Activated CD4-positive, alpha-beta memory T cell treated with anti-CD3 and anti-CD28 coated beads for 36 hours (primary cell): ENCODE measurements at regions of chr1 and their contacts with region 1.

Region 1: DNA sequence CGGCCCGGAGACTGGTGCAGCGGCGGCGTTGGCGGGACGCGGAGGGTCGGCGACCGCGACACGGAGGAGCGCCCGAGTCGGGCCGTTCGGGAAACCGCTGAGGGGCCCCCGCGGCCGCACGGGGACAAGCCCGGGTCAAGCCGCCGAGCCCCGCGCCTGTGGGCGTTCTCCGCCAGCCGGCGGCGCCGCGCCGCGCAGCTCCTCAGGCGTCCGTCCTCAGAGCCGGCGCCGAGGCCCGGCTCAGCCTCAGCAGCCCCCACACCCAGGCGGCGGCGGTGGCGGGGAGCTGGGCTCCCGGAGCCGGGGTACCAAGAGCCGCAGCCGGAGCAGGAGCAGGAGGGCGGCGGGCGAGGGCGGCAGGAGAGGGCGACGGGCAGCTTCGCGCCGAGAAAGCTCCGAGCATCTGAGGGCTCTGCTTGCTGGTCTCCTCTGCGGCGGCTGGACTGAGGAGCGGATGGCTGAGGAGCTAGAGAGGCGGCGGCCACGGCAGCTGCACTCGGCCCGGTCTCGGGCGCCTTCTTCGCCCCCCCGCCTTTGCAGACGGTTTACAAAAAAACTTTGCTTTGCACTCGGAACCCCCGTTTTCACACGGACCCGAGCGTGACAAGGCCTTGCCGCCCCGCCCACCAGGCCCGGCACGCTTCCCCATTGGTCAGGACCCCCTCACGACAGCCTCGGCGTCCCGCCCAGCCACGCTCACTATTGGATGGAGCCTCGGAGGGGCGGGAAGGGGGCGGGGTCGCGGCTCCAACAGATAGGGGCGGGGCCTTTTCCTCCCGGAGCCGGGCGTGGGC is at the start of gene SLC30A1:
- DNase-seq: peak; percentile 99
- H3K4me3 Mint-ChIP-seq: peak within 1 kb of the TSS; percentile 91
- H3K27ac Mint-ChIP-seq: peak within 1 kb of the TSS; percentile 69
- H3K4me1 Mint-ChIP-seq: peaks cover 32% of the 10 kb centered on the region
- H3K27me3 Mint-ChIP-seq: no peaks in the 10 kb centered on the region
- total RNA-seq, gene SLC30A1: 3.5 to 3.9 TPM

Region 2: GRCh38 chr1:211258756-211259637 is 319.8 kb before region 1 on chr1 and contains the start of gene RCOR3:
- CTCF ChIA-PET with region 1: no interaction called
- POLR2A ChIA-PET with region 1: interaction called, 3 read pairs
- intact Hi-C with region 1: loop called (anchors 1 kb)
- DNase-seq: peak; percentile 95
- H3K4me3 Mint-ChIP-seq: peak within 1 kb of the TSS; percentile 83
- H3K27ac Mint-ChIP-seq: peak within 1 kb of the TSS; percentile 93
- H3K4me1 Mint-ChIP-seq: peaks cover 16% of the 10 kb centered on the region
- H3K27me3 Mint-ChIP-seq: no peaks in the 10 kb centered on the region
- total RNA-seq, gene RCOR3: 30.2 to 32.7 TPM

Region 3: DNA sequence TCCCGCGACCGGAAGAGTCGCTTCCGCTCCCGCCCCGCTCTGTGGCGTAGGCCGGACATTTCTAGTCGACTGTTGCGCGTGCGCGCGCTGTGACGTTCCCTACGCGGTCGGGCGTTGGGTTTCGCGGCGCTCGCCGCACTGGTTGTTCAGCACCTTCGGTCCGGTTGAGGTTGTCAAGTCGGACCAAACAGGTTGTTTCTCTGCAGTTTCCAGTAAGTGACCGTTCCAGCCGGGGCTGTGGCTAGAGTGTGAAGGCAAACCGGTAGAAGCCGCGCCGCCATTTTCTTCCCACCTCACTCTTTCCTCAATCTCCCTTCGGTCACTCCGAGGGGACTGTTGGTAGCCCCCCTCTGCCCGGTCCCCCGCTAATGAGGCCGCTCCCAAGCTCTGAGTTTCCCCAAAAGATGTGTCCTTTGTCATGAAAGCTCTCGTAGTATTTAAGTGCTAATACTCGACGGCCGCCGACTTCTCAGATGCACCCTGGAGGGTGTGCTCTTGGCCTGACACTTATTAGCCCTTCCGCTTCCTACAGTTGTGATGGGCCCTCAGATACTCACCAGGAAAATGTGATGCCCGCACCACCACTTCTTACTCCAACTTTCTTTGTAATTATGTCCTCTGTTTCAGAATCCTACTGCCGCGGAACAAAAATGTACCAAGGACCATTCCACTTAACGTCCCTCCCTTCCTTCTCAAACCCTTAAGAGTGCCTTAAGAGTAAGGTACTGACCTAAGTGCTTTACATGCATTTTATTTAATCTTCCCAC is 195.9 kb before region 1 on chr1:
- CTCF ChIA-PET with region 1: no interaction called
- POLR2A ChIA-PET with region 1: no interaction called
- intact Hi-C with region 1: loop called (anchors 1 kb)
- DNase-seq: peak; percentile 88
- H3K4me3 Mint-ChIP-seq: peak overlapping the region; percentile 78
- H3K27ac Mint-ChIP-seq: peak overlapping the region; percentile 88
- H3K4me1 Mint-ChIP-seq: peaks cover 42% of the 10 kb centered on the region
- H3K27me3 Mint-ChIP-seq: no peaks in the 10 kb centered on the region

Region 4: DNA sequence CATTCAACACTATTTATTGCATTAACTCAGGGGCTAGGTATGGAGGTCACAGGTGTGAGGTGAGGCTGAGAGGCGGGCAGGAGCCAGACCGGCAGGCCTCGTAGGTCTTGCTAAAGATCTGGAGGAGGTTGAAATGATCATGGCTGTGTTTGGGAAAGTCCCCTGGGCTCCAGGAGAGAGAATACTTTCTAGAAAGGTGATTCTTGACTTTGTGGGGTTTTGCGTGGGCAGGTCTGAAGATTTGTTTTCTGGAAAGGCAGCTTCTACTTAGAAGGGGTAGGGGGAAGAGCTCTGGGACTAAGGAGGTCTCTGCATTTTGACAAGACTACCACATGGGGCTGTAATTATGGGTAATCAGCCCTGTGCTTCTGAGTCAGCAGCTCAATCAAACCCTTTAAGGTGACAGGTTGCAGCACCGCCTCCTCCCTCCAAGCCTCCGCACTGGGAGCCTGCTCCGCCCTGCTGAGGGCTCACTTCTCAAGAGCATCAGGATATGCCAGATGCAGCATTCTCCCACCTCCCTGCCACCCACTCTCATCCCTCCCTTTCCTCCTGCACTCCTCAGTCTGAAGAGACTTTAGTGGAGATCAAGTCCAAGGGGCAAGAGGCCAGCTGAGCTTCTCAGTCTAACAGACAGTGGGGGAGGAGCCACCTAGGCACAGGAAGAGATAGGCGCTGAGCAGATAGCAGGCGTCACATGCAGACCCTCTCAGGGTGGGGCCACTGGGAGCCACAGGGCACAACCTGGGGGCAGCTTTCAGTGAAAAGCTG is 30.3 kb before region 1 on chr1:
- CTCF ChIA-PET with region 1: interaction called, 3 read pairs
- POLR2A ChIA-PET with region 1: interaction called, 3 read pairs
- intact Hi-C with region 1: loop called (anchors 2 kb)
- DNase-seq: peak; percentile 67
- H3K4me3 Mint-ChIP-seq: no peak overlapping the region
- H3K27ac Mint-ChIP-seq: no peak overlapping the region
- H3K4me1 Mint-ChIP-seq: no peaks in the 10 kb centered on the region
- H3K27me3 Mint-ChIP-seq: no peaks in the 10 kb centered on the region

Region 5: DNA sequence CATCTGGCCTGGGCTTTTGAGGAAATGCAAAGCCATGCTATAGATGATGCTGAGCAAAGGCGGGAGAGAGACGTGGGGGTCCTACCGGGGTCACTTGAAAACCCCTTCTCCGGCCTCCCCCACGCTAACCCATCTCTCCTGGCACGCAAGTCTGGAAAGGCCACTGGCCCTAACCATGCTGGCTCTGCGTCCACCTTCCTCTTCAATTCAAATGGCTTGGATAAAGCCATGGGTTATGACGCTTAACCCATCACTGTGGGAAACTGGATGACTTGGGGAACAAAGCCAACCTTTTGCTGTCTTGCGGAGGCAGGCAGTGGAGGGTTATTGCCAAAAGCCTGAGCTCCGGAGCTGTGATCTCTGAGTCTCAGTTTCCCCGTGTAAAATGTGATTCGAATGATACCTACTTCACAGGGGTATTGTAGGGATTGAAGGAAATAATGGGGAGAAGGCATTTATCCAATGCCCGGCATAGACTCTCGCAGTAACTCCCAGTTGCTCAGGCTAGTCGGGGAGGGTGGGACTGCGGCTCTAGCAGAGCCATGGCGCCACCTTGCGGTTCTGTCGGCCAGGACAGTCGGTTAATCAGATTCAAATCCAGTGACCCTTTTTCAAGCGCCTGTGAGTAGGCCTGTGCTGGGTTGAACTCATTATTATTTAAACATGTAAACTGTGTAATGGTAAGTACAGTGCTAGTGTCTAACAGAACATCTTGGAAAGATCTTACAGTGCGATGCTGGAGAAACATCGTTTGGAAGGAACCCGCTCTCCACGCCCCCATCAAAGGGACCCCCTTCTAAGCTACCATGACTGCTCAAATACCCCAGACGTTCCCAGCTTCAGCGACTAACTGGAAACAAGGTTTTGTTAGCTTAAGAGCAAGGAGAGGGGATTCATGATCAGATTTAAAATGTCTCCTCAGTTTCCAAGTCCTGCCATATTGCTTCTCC is 76.3 kb after region 1 on chr1:
- CTCF ChIA-PET with region 1: interaction called, 20 read pairs
- POLR2A ChIA-PET with region 1: no interaction called
- intact Hi-C with region 1: loop called (anchors 1 kb)
- DNase-seq: peak; percentile 87
- H3K4me3 Mint-ChIP-seq: no peak overlapping the region
- H3K27ac Mint-ChIP-seq: no peak overlapping the region
- H3K4me1 Mint-ChIP-seq: no peaks in the 10 kb centered on the region
- H3K27me3 Mint-ChIP-seq: no peaks in the 10 kb centered on the region

Region 6: DNA sequence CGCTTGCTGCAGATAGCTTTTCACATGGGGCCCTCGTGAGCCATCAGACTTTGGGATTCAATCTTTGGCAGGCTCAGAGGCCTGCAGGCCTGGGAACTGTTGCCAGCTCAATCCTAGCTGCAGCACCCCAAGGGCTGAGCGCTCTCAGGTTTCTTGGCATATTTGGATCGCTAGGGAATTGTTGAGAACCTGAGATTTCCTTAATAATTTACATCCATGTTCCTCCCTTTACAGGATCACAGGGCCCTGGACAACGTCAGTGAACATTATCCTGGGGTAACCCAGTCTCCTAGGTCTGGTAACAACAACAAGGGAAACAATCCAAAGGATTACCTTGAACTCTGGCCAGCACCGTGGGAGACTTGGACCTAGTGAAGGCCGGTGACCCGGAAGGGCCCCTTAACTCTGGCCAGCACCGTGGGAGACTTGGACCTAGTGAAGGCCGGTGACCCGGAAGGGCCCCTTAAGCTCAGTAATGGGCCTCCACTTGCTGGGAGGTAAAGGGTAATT is 145.9 kb after region 1 on chr1:
- CTCF ChIA-PET with region 1: no interaction called
- POLR2A ChIA-PET with region 1: no interaction called
- intact Hi-C with region 1: no loop called
- DNase-seq: no peak
- H3K4me3 Mint-ChIP-seq: no peak overlapping the region
- H3K27ac Mint-ChIP-seq: no peak overlapping the region
- H3K4me1 Mint-ChIP-seq: no peaks in the 10 kb centered on the region
- H3K27me3 Mint-ChIP-seq: peaks cover 4% of the 10 kb centered on the region

Region 7: DNA sequence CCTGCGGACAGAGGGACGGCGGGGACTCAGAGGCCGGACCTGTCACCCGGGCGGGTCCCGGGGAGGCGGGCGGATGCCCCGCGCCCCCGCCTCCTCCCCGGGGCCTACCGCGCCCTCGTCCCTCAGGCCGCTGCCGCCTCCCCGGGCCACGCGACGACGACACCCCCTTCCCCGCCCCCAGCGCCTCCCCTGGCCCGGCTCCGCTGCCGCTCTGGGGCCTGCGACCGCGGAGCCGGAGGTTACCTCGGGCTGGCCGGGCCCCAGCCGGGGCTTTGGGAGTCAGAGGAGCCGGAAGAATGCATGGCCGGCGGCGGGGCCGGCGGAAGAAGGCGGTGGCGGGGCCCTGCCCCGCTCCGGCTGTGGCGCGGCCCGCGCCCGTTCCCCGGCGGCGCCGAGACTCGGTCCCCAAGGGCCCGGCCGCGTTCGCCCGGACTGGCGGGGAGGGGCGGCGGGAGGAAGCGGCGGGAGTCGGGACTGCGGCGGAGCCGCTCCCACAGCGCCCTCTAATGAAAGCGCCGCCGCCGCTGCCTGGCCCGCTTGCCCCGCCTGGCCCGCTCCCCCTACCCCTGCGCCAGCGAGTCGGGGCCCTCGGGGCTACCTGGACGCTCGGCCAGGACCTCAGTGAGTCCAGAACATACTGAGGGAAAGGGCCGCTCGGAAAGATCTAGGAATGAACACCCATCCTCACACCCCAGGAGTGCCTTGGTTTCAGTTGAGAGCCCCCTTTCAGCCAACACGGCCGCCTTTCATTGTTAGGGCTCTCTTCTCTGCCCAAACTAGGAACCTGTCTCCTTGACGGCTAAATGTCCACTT is 251.7 kb after region 1 on chr1 and contains the start of gene LPGAT1:
- CTCF ChIA-PET with region 1: no interaction called
- POLR2A ChIA-PET with region 1: no interaction called
- intact Hi-C with region 1: loop called (anchors 5 kb)
- DNase-seq: peak; percentile 77
- H3K4me3 Mint-ChIP-seq: peak within 1 kb of the TSS; percentile 86
- H3K27ac Mint-ChIP-seq: peak within 1 kb of the TSS; percentile 83
- H3K4me1 Mint-ChIP-seq: peaks cover 61% of the 10 kb centered on the region
- H3K27me3 Mint-ChIP-seq: no peaks in the 10 kb centered on the region
- total RNA-seq, gene LPGAT1: 31.8 to 34.7 TPM

Region 8: DNA sequence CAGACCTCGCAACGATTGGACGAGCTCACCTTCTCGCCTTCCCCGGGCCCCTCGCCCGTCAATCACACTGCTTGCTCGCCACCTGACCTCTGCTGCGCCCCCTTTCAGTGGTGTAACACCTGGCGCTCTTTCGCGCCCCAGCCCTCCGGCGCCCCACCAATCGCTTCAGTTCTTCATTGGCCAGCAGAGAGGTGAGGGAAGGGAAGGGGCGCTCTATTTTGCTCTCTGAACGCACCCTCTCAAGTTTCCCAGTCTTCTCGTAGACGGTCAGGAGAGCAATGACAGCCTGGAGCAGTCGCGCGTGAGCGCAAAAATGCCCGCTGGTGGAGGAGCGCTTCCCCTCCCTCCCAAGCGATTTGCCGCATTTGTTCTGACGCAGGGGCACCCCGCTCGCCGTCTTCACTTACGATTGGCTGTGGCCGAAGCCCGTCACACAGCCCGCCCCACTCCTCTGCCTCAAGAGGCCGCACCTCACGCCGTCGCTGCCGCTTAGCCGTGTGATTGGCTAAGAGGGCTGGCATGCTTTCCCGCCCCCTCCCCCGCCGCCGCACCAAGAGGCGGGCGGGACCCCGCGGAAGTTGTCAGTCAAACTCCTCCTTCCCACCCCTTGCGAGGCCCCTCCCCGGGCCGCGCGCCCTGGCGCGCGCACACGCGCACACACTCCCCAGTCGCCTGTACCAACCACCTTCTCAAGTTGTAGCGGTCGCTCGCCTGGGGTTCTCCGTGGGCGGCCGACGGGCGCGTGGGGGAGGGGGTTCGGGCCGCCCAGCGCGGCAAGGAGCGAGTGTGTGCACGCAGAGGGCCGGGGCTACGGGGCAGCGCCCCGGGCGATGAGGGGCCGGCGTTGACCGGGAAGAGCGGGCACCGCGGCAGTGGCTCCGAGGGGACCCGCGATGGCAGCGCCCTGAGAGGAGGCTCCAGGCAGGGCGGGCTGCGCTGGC is 706.2 kb after region 1 on chr1 and contains the start of gene PPP2R5A:
- CTCF ChIA-PET with region 1: no interaction called
- POLR2A ChIA-PET with region 1: no interaction called
- intact Hi-C with region 1: loop called (anchors 1 kb)
- DNase-seq: peak; percentile 99
- H3K4me3 Mint-ChIP-seq: peak within 1 kb of the TSS; percentile 92
- H3K27ac Mint-ChIP-seq: peak within 1 kb of the TSS; percentile 93
- H3K4me1 Mint-ChIP-seq: peaks cover 31% of the 10 kb centered on the region
- H3K27me3 Mint-ChIP-seq: no peaks in the 10 kb centered on the region
- total RNA-seq, gene PPP2R5A: 38.6 to 40.4 TPM